Panc1 (cell line): ENCODE measurements at regions of chr2 and their contacts with region 1.

Region 1: DNA sequence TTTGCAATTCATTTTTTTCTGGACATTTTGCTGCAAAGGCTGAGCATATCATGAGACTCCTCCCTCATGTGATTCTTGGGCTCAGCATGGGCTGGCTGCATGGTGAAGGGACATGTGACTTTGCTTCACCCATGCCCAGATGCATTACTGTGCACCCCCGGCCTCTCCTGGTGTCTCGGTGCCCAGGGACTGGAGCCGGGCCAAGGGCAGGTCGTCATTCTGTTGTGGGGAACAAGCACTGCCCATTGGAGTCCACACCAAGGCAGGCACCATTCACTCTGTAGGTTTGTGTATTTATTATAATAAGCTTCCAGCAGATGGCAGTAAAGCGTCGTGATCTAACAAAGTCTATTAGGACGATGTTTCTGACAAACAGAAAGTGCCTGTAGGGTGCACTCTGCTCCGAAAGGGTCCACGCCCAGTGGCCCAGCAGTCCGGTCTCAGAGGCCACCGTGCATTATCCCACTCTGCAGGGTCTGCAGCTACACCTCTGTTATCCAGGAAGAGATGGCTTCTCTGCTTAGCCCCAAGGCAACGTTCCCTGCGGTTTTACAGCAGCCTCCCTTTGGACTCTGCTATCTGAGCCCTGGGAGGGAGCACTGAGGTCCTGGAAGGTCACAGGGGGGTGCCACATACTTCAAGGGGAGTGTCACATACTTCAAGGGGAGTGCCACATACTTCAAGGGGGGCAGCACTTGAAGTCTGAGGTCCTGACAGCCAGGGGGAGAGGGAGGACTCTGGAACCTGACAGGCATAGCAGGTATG is 219.6 kb downstream of the TSN start:
- DNase-seq: peak; percentile 27
- ATAC-seq: peak; percentile 98
- H3K4me3 ChIP-seq: peak overlapping the region in 1 of 2 experiments; percentile 44; a peak in 2 of 4 replicates
- H3K27ac ChIP-seq: no peak overlapping the region
- H3K4me1 ChIP-seq: no peaks in the 10 kb centered on the region
- H3K27me3 ChIP-seq: 0 out of 2 replicates have a peak, but pooled peaks cover 3% of the 10 kb centered on the region
- CTCF ChIP-seq: peak; percentile 79

Region 2: DNA sequence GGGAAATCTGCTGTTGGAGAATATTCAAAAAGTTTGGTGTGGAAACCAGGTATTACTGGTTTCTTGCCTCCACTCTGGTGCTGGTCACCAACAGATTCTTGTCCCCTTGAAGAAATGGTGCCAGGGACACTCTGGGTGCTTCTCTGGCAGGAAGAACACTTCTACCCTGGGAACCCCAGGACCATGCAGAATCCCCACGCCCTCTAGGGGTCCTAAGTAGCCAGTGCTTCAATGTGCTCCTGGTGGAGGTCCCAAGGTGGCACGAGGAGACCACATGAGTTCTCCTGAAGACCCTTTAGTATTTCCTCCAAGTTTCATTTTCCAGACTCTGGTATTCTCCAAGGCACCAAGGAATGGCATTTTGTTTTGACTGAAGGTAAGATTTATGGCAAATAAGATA is 161.0 kb after region 1 on chr2:
- CTCF ChIA-PET with region 1: no interaction called
- POLR2A ChIA-PET with region 1: no interaction called
- in situ Hi-C with region 1: no loop called
- intact Hi-C with region 1: loop called (anchors 10 kb)
- DNase-seq: peak; percentile 4
- ATAC-seq: peak; percentile 80; the same call in 1 of the 2 replicates
- H3K4me3 ChIP-seq: no peak overlapping the region
- H3K27ac ChIP-seq: no peak overlapping the region
- H3K4me1 ChIP-seq: no peaks in the 10 kb centered on the region
- H3K27me3 ChIP-seq: no peaks in the 10 kb centered on the region
- CTCF ChIP-seq: peak; percentile 75

Region 3: GRCh38 chr2:122451040-122451439 is 476.0 kb after region 1 on chr2:
- CTCF ChIA-PET with region 1: no interaction called
- POLR2A ChIA-PET with region 1: no interaction called
- in situ Hi-C with region 1: no loop called
- intact Hi-C with region 1: loop called (anchors 2 kb)
- DNase-seq: no peak
- ATAC-seq: no peak
- H3K4me3 ChIP-seq: no peak overlapping the region
- H3K27ac ChIP-seq: no peak overlapping the region
- H3K4me1 ChIP-seq: no peaks in the 10 kb centered on the region
- H3K27me3 ChIP-seq: no peaks in the 10 kb centered on the region
- CTCF ChIP-seq: peak; percentile 64